ENCODE measurements at regions of chr12 and their contacts with region 1.

Region 1: DNA sequence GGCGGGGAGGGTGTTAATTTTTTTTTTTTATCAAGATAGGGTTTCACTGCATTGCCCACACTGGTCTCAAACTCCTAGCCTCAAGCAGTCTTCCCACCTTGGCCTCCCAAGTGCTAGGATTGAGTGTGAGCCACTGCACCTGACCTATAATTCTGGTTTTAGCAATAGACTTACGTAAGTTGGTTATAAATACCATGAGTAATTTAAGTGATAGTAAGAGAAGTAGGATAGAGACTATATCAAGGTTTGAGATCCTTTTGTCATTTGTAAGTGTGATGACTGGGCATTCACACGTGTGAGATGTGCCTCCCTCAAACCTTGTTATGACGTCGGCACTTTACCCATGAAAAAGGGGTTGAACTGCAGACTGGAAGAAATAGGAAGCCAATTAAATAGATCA is 22.5 kb downstream of the SINHCAF start:
- DNase-seq: no peak
- H3K4me3 Mint-ChIP-seq: no peak overlapping the region
- H3K27ac Mint-ChIP-seq: no peak overlapping the region
- H3K4me1 Mint-ChIP-seq: peaks cover 29% of the 10 kb centered on the region
- H3K27me3 Mint-ChIP-seq: no peaks in the 10 kb centered on the region

Region 2: GRCh38 chr12:31317471-31318395 is 14.3 kb after region 1 on chr12:
- intact Hi-C with region 1: loop called (anchors 2 kb)
- DNase-seq: peak; percentile 60
- H3K4me3 Mint-ChIP-seq: peak overlapping the region; percentile 97
- H3K27ac Mint-ChIP-seq: peak overlapping the region; percentile 98
- H3K4me1 Mint-ChIP-seq: peaks cover 70% of the 10 kb centered on the region
- H3K27me3 Mint-ChIP-seq: no peaks in the 10 kb centered on the region

Measured in activated CD4-positive, alpha-beta T cell treated with anti-CD3 and anti-CD28 coated beads, Interleukin-2, amount 10 ng/mL, durations not matched to agents 24 days and 14 days (primary cell).